Right cardiac atrium (tissue), 5 donors: ENCODE measurements at regions of chr9 and their contacts with region 1.

Region 1: GRCh38 chr9:131739980-131740648 is at the start of gene RAPGEF1:
- DNase-seq: peak; percentile 70 to 92 (median 87)
- ATAC-seq: peak; percentile 68
- H3K4me3 ChIP-seq: peak within 1 kb of the TSS; percentile 99
- H3K27ac ChIP-seq: peak within 1 kb of the TSS; percentile 96
- H3K4me1 ChIP-seq: peaks cover 16% of the 10 kb centered on the region
- H3K27me3 ChIP-seq: no peaks in the 10 kb centered on the region
- total RNA-seq, gene RAPGEF1: 82.3 to 100 (median 93.0) TPM

Region 2: GRCh38 chr9:131349881-131350563 is 390.1 kb before region 1 on chr9:
- intact Hi-C with region 1: loop called in 2 of 4 experiments (anchors 10 kb)
- DNase-seq: peak; percentile 91 to 97 (median 95)
- ATAC-seq: peak; percentile 90 to 92
- H3K4me3 ChIP-seq: peak overlapping the region; percentile 23
- H3K27ac ChIP-seq: no peak overlapping the region
- H3K4me1 ChIP-seq: no peaks in the 10 kb centered on the region
- H3K27me3 ChIP-seq: no peaks in the 10 kb centered on the region

Region 3: DNA sequence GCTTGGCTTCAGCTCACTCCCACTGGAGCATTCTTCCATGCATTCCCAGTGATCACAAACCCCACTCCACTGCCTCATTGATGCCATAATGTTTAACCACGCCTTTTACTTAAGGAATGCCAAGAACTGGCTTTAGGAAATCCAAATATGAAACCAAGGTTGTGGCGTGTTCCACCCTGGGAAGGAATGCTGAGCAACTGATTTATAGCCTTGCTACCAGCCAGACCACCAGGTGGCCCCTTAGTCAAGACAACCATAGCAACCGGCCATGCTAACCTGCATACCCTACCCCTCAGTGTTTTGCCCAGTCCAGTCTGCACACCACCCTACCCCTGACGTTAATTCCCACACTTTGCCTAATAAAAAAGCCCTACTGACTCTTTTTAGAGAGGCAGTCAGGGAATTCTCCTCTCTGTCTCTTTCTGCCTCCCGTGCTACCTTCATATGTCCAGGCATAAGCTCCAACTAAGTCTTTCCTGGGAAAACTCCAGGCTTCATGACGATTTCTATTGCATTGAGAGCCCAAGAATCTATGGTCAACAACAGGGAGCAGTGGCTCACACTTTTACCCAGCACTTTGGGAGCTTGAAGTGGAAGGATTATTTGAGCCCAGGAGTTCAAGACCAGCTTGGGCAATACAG is 373.2 kb before region 1 on chr9:
- intact Hi-C with region 1: loop called in 1 of 4 experiments (anchors 10 kb)
- DNase-seq: peak in 2 of 3 donors; percentile 57 to 77
- ATAC-seq: peak; percentile 79 to 83
- H3K4me3 ChIP-seq: no peak overlapping the region
- H3K27ac ChIP-seq: peak overlapping the region; percentile 2
- H3K4me1 ChIP-seq: no peaks in the 10 kb centered on the region
- H3K27me3 ChIP-seq: no peaks in the 10 kb centered on the region

Region 4: DNA sequence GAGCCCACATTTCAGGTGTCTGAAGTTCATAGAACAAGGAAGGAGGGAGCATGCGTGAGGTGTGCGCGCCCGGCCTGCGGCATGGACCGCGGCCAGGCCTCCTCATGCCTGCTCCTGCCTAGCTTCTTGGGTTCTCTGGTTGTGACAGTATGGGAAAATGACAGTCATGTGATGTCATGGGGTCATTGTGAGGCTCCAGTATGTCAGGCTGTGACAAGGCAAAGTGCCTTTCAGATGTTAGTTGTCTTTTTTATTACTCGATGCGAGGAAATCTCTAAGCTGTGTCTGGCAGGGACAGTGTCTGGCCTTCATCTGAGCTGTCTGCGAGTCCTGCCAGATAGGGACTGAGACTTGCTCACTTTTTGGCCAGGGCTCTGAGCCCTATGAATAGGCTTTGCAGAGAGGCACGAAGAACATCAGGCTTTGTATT is 222.3 kb before region 1 on chr9:
- intact Hi-C with region 1: loop called in 1 of 4 experiments (anchors 10 kb)
- DNase-seq: peak; percentile 55 to 77 (median 65)
- ATAC-seq: peak; percentile 81 to 86
- H3K4me3 ChIP-seq: no peak overlapping the region
- H3K27ac ChIP-seq: peak overlapping the region; percentile 32
- H3K4me1 ChIP-seq: peaks cover 1% of the 10 kb centered on the region
- H3K27me3 ChIP-seq: no peaks in the 10 kb centered on the region

Region 5: DNA sequence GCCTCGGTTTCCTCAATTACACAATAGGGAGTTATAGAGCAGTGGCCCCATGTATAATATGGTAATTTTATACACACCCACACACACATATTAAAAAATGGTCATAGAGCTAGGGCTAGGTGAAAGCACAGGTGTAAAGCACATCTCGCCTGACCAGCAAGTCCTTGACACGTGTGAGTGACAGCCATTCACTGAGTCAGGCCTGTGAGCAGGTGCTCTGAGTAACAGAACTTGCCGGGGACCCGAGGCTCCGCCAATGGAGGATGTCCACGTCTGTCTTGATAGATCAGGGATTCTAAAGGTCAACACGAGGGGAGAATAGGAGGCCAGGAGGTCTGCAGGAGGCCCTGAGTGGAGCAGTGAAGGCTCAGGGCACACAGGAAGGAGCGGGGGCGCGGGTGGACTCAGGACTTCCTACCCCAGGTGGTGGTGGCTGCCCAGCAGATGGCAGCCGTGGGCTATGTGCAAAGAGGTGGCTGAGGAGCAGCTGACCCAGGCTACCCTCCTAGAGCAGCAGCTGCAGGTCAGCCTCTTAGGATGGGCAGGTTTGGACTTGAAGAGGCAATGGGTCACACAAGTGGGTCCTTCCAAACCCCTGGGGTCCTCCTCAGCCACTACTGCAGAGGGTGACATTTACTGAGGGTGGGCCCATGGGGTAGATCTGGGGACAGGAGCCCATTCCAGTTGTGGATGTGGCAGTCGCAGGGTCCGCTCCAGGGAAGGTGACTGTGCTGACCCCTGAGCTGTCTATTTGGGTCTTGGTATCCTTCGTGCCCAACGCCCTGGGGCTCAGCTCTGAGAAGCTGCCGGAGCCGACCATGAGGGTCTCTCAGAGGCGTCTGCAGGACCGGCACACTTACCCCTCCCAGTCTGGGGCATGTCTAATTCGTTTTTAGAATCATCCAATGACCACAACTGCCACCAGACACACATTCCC is 148.9 kb before region 1 on chr9:
- intact Hi-C with region 1: loop called (anchors 1 to 5 kb)
- DNase-seq: peak; percentile 81 to 94 (median 93)
- ATAC-seq: peak; percentile 81 to 83
- H3K4me3 ChIP-seq: no peak overlapping the region
- H3K27ac ChIP-seq: no peak overlapping the region
- H3K4me1 ChIP-seq: peaks cover 7% of the 10 kb centered on the region
- H3K27me3 ChIP-seq: no peaks in the 10 kb centered on the region

Region 6: GRCh38 chr9:131608493-131609037 is 131.5 kb before region 1 on chr9:
- intact Hi-C with region 1: loop called in 1 of 4 experiments (anchors 5 kb)
- DNase-seq: peak; percentile 57 to 85 (median 81)
- ATAC-seq: peak; percentile 74 to 76
- H3K4me3 ChIP-seq: no peak overlapping the region
- H3K27ac ChIP-seq: peak overlapping the region; percentile 96
- H3K4me1 ChIP-seq: peaks cover 24% of the 10 kb centered on the region
- H3K27me3 ChIP-seq: no peaks in the 10 kb centered on the region

Region 7: GRCh38 chr9:131656356-131657036 is 83.6 kb before region 1 on chr9:
- intact Hi-C with region 1: no loop called
- DNase-seq: peak; percentile 65 to 84 (median 82)
- ATAC-seq: peak; percentile 70 to 74
- H3K4me3 ChIP-seq: no peak overlapping the region
- H3K27ac ChIP-seq: peak overlapping the region; percentile 53
- H3K4me1 ChIP-seq: peaks cover 28% of the 10 kb centered on the region
- H3K27me3 ChIP-seq: no peaks in the 10 kb centered on the region

Region 8: DNA sequence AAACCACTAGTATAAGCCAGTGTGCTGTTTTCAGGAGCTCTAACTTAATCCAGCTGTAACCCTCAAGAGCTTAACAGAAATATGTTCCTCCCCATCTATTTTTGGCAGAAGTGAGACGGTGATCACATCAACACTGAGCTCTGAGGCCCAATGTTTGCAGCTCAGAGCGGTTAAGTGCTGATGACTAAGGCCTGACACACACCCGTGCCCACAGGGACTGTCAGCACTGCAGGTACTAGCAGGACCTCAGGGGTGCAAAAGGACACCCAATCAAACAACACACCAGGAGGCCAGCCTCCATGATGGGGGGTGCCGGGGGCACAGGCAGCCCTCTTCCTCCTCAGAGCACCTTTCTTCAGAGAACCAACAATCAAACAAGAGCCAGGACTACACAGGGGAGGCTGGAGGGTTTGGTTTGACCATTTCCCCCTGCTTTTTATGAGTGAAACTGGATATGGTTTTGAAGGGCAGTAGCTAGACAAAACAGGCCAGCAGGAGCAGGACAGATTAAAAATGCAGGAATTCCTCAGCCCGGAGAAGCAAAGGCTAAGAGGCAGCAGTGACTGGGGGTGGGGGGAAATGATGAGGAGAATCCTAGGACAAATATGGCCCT is 61.5 kb before region 1 on chr9:
- intact Hi-C with region 1: loop called in 1 of 4 experiments (anchors 10 kb)
- DNase-seq: peak; percentile 73 to 84 (median 81)
- ATAC-seq: peak; percentile 93 to 95
- H3K4me3 ChIP-seq: no peak overlapping the region
- H3K27ac ChIP-seq: peak overlapping the region; percentile 88
- H3K4me1 ChIP-seq: peaks cover 32% of the 10 kb centered on the region
- H3K27me3 ChIP-seq: no peaks in the 10 kb centered on the region

Region 9: DNA sequence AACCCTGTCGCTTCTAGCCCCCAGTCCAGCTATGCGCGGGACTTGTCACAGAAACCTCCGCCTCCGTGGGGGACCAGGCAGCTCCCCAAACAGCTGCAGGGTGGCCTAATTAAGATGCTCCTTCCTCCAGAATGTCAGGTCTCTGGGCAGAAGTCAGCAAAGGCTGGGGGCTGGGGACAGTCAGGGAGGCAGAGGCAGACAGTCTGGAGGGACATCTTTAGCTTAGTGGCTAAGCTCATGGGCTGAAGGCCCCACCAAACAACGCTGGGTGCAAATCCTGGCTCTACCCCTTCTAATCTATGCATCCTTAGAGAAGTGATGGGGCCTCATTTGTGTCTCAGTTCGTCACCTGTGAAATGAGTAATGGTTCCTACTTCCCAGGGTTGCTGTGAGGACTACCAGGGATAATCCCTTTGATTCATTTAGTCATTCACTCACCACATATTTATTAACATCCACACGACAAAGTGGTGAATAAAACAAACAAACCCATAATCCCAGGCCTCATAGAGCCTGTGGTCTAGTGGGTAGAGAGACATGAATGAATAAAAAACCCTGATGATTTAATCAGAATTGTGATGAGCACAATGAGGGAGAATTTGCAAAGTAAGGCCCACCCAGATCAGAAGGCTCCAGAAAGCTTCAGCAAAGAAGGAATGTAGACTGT is 359.8 kb after region 1 on chr9:
- intact Hi-C with region 1: no loop called
- DNase-seq: no peak
- ATAC-seq: no peak
- H3K4me3 ChIP-seq: no peak overlapping the region
- H3K27ac ChIP-seq: no peak overlapping the region
- H3K4me1 ChIP-seq: no peaks in the 10 kb centered on the region
- H3K27me3 ChIP-seq: no peaks in the 10 kb centered on the region

Region 10: DNA sequence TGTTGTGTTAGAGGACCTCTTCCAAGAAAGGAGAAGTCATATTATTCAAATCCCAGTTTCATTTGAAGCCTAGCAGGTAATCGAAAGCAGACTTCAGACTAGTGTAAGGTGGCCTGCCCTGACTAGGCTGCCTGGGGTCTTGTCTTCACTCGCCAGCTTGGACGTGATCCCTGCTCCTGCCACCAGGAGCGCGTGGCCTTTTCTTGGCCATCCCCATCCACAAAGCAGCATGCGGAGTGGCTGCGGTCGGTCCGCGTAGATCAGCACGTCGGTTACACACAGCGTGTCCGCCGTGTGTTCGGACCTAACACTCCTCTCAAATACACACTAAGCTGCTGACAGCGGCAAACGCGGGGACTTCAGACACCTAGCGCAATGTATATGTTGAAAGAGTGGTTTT is 707.2 kb after region 1 on chr9:
- intact Hi-C with region 1: no loop called
- DNase-seq: no peak
- ATAC-seq: no peak
- H3K4me3 ChIP-seq: no peak overlapping the region
- H3K27ac ChIP-seq: no peak overlapping the region
- H3K4me1 ChIP-seq: no peaks in the 10 kb centered on the region
- H3K27me3 ChIP-seq: no peaks in the 10 kb centered on the region